RWPE1 (cell line): ENCODE measurements at regions of chr10 and their contacts with region 1.

Region 1: GRCh38 chr10:110354322-110354766 is 49.6 kb upstream of the SMNDC1 start:
- DNase-seq: no peak
- H3K27ac ChIP-seq: peak overlapping the region; percentile 83
- CTCF ChIP-seq: peak; percentile 44

Region 2: DNA sequence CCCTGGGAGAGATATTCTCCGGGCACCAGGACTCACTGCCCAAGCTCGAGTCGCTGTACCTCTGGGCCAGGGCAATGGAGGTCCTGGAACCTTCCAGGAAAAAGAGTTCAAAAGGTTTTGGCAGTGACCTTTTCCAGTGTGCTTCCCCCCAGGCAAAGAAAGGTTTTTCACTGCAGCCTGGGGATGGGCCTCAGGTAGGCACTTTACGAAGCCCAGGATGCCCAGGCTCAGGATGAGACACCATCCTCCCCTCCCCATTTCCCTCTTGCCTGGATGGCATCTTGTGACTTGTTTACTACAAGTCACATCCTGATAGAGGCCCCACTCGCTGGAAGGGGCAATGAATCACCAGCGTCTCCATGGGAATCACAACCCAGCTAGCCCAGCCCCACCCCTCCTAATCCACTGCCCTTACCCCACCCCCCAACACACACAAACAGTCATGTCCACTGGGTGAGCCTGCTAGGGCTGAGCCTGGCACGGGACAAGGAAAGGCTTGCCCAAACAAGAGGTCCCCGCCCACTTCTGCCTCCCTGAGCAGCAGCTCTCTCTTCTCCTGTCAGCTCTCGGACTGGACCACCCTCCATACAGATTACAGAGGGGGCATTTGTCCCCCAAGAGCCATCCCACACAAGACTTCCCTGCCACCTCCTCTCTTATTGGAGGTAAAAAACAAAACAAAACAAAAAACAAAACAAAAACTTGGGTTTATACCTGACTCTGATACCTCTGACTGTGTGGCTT is 44.2 kb after region 1 on chr10:
- CTCF ChIA-PET with region 1: no interaction called
- POLR2A ChIA-PET with region 1: interaction called, 12 read pairs
- DNase-seq: peak; percentile 100
- H3K27ac ChIP-seq: peak overlapping the region; percentile 91
- CTCF ChIP-seq: no peak

Region 3: DNA sequence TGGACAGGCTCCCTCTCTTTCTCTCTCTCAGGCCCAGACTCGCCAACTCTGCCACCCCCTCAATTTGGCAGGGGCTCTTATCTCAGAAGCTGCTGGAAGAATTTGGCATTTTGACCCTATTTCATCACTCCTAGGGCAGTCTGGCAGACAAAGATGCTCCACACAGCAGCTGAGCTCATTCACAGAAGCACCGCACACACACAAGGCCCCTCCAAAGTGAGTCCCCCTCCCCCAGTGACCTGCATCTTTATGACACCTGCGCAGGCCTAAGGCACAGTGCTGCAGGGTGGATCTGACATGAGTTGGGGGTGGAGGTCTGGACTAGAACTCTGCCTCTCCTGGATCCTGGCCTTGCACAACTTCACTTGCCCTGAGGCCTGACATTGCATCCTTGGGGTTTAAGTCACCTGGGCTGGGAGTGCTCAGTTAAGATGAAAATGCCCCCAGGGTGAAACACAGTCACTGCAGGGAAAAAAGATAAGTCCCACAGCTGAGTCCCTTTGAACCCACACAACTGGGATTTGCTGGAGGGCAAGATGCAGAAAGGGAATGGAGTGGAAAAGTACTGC is 102.3 kb after region 1 on chr10:
- CTCF ChIA-PET with region 1: no interaction called
- POLR2A ChIA-PET with region 1: no interaction called
- DNase-seq: peak; percentile 85
- H3K27ac ChIP-seq: peak overlapping the region; percentile 87
- CTCF ChIP-seq: no peak

Region 4: GRCh38 chr10:110497438-110498086 is 143.2 kb after region 1 on chr10 and contains the start of gene DUSP5:
- CTCF ChIA-PET with region 1: interaction called, 18 read pairs
- POLR2A ChIA-PET with region 1: interaction called, 14 read pairs
- DNase-seq: peak; percentile 96
- H3K27ac ChIP-seq: peak within 1 kb of the TSS; percentile 89
- CTCF ChIP-seq: no peak

Region 5: GRCh38 chr10:110698782-110699201 is 344.4 kb after region 1 on chr10:
- CTCF ChIA-PET with region 1: no interaction called
- POLR2A ChIA-PET with region 1: no interaction called
- DNase-seq: no peak
- H3K27ac ChIP-seq: no peak overlapping the region
- CTCF ChIP-seq: no peak